Psoas muscle (tissue), 8 donors: ENCODE measurements at regions of chr15 and their contacts with region 1.

Region 1: GRCh38 chr15:57198654-57199291 is 177.5 kb upstream of the CGNL1 start:
- DNase-seq: no peak
- ATAC-seq: no peak
- H3K4me3 ChIP-seq: no peak overlapping the region
- H3K27ac ChIP-seq: no peak overlapping the region
- H3K4me1 ChIP-seq: no peaks in the 10 kb centered on the region
- H3K27me3 ChIP-seq: no peaks in the 10 kb centered on the region
- CTCF ChIP-seq: no peak

Region 2: GRCh38 chr15:57160823-57161560 is 37.8 kb before region 1 on chr15:
- intact Hi-C with region 1: loop called (anchors 1 to 5 kb)
- DNase-seq: no peak
- ATAC-seq: no peak
- H3K4me3 ChIP-seq: no peak overlapping the region
- H3K27ac ChIP-seq: no peak overlapping the region
- H3K4me1 ChIP-seq: peaks cover 23% of the 10 kb centered on the region
- H3K27me3 ChIP-seq: no peaks in the 10 kb centered on the region
- CTCF ChIP-seq: no peak

Region 3: DNA sequence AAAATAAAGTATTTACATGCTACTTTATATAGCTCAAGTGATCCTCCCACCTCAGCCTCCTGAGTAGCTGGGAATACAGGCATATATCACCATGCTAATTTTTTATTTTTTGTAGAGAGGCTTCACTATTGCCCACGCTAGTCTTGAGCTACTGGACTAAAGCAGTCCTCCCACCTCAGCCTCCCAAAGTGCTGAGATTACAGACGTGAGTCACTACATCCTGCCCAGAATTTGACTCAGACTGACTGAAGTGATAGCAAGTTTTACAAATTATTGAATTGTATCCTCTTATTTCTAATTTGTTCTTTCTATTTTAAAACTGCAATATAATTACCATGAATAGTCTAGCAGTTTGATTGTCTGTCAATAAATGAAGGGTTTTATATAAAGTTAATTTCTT is 32.8 kb before region 1 on chr15:
- intact Hi-C with region 1: loop called (anchors 1 to 5 kb)
- DNase-seq: no peak
- ATAC-seq: no peak
- H3K4me3 ChIP-seq: no peak overlapping the region
- H3K27ac ChIP-seq: no peak overlapping the region
- H3K4me1 ChIP-seq: no peaks in the 10 kb centered on the region
- H3K27me3 ChIP-seq: no peaks in the 10 kb centered on the region
- CTCF ChIP-seq: no peak

Region 4: GRCh38 chr15:57298204-57298603 is 99.4 kb after region 1 on chr15:
- intact Hi-C with region 1: no loop called
- DNase-seq: no peak
- ATAC-seq: no peak
- H3K4me3 ChIP-seq: no peak overlapping the region
- H3K27ac ChIP-seq: no peak overlapping the region
- H3K4me1 ChIP-seq: no peaks in the 10 kb centered on the region
- H3K27me3 ChIP-seq: no peaks in the 10 kb centered on the region
- CTCF ChIP-seq: no peak